ENCODE measurements at regions of chr1 and their contacts with region 1.

Region 1: DNA sequence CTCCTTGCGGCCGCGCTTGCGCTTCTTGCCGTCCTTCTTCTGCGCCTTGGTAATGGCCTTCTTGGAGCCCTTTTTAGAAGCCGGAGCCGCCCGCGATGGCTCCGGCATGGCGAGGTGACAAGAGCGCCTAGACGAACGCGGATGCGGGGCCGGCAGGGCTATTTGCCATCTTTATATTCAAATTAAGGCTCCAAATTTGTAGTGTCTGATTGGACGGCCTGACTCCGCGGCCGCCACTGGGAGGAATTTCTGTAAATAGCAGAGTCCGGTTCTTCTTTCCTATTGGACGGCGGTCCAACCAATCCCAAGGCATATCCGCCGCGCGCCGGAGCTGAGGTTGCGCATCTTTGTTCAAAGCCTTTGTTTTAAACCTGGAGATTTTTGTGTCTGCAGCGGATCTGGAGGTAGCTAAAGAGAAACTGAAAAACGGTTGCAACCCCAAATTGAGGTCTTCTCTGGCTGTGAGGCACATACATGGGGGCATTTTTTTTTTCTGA is 22.6 kb upstream of the RNF187 start:
- DNase-seq: peak; percentile 75 to 95 (median 86)
- ATAC-seq: peak; percentile 96
- H3K4me3 ChIP-seq: peak overlapping the region; percentile 45 to 51
- H3K4me3 Mint-ChIP-seq: peak overlapping the region; percentile 85
- H3K27ac ChIP-seq: peak overlapping the region; percentile 18 to 41
- H3K27ac Mint-ChIP-seq: peak overlapping the region; percentile 69
- H3K4me1 ChIP-seq: peaks cover 28% of the 10 kb centered on the region
- H3K4me1 Mint-ChIP-seq: peaks cover 40% of the 10 kb centered on the region
- H3K27me3 ChIP-seq: no peaks in the 10 kb centered on the region
- H3K27me3 Mint-ChIP-seq: peaks cover 14% of the 10 kb centered on the region
- CTCF ChIP-seq: no peak

Region 2: GRCh38 chr1:228275739-228276421 is 188.7 kb before region 1 on chr1:
- CTCF ChIA-PET with region 1: no interaction called
- POLR2A ChIA-PET with region 1: no interaction called
- intact Hi-C with region 1: loop called in 1 of 2 experiments (anchors 1 kb)
- DNase-seq: peak; percentile 74 to 95 (median 92)
- ATAC-seq: peak; percentile 96
- H3K4me3 ChIP-seq: peak overlapping the region; percentile 75 to 81
- H3K4me3 Mint-ChIP-seq: peak overlapping the region; percentile 80
- H3K27ac ChIP-seq: peak overlapping the region; percentile 31 to 39
- H3K27ac Mint-ChIP-seq: peak overlapping the region; percentile 18
- H3K4me1 ChIP-seq: peaks cover 6% of the 10 kb centered on the region
- H3K4me1 Mint-ChIP-seq: peaks cover 12% of the 10 kb centered on the region
- H3K27me3 ChIP-seq: no peaks in the 10 kb centered on the region
- H3K27me3 Mint-ChIP-seq: no peaks in the 10 kb centered on the region
- CTCF ChIP-seq: no peak

Region 3: DNA sequence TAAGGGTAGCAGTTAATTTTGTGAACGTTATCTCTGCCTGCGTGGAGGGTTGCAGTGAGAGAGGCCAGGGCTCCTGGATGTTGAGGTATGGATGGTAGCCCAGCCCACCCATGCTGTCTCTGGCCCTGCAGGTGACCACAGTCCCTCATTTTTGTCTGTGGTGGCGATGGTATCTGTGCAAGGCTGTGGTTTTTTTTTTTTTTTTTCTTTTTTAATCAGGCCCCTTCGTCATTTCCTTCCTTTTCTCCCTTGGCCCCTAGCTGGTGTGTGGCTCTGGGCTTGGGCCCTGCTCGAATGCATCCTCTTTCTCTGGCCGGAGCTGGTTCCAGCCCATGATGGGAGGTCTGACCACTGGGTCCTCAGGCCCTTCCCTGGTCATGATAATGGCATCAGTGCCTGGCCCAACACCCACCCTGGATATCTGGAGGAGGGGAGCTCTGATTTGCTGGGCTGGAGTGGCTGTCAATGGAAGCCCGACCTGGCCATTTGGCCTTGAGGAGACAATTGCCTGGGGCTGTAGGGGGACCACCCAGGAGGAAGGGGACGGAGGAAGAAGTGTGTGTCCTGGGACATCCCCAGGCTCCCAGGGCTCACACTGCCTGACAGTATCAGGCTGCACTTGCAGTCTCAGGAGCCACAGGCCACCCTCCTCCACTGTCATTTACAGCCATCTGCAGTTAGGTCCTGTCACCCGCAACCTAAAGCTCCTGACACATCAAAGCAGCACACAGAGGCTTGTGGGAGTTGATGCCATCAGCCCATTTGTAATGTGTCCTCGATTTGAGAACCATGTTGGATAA is 14.6 kb after region 1 on chr1:
- CTCF ChIA-PET with region 1: interaction called, 9 read pairs
- POLR2A ChIA-PET with region 1: interaction called, 4 read pairs
- intact Hi-C with region 1: loop called in 1 of 2 experiments (anchors 1 kb)
- DNase-seq: peak in 2 of 9 experiments; percentile 52 to 61
- ATAC-seq: peak; percentile 52
- H3K4me3 ChIP-seq: no peak overlapping the region
- H3K4me3 Mint-ChIP-seq: no peak overlapping the region
- H3K27ac ChIP-seq: peak overlapping the region in 1 of 2 experiments; percentile 63
- H3K27ac Mint-ChIP-seq: peak overlapping the region; percentile 77
- H3K4me1 ChIP-seq: peaks cover 8% of the 10 kb centered on the region
- H3K4me1 Mint-ChIP-seq: peaks cover 17% of the 10 kb centered on the region
- H3K27me3 ChIP-seq: no peaks in the 10 kb centered on the region
- H3K27me3 Mint-ChIP-seq: no peaks in the 10 kb centered on the region
- CTCF ChIP-seq: no peak

Region 4: GRCh38 chr1:228486596-228487335 is 22.2 kb after region 1 on chr1:
- CTCF ChIA-PET with region 1: interaction called, 10 read pairs
- POLR2A ChIA-PET with region 1: interaction called, 38 read pairs
- intact Hi-C with region 1: loop called (anchors 1 to 2 kb)
- DNase-seq: peak; percentile 66 to 94 (median 77)
- ATAC-seq: peak; percentile 75
- H3K4me3 ChIP-seq: peak overlapping the region; percentile 88 to 90
- H3K4me3 Mint-ChIP-seq: peak overlapping the region; percentile 98
- H3K27ac ChIP-seq: peak overlapping the region; percentile 100
- H3K27ac Mint-ChIP-seq: peak overlapping the region; percentile 100
- H3K4me1 ChIP-seq: peaks cover 31% of the 10 kb centered on the region
- H3K4me1 Mint-ChIP-seq: peaks cover 37% of the 10 kb centered on the region
- H3K27me3 ChIP-seq: no peaks in the 10 kb centered on the region
- H3K27me3 Mint-ChIP-seq: no peaks in the 10 kb centered on the region
- CTCF ChIP-seq: no peak

Region 5: DNA sequence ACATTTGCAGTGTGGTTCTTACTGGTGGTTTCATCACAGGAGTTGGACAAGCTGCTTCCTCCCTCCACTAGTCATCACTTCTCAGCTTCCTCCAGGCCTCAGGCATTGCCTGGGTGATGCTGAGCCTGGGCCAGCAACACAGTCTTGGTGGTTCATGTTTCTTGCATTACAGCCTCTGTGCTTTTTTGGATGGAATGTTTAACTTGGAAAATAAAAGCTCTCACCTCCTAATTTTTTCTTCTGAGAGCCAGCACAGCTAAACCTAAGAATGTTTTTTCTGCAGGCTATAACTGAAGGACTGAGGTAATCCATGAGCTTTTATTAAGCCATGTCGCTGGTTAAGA is 204.7 kb after region 1 on chr1:
- CTCF ChIA-PET with region 1: no interaction called
- POLR2A ChIA-PET with region 1: no interaction called
- intact Hi-C with region 1: no loop called
- DNase-seq: no peak
- ATAC-seq: no peak
- H3K4me3 ChIP-seq: no peak overlapping the region
- H3K4me3 Mint-ChIP-seq: no peak overlapping the region
- H3K27ac ChIP-seq: no peak overlapping the region
- H3K27ac Mint-ChIP-seq: no peak overlapping the region
- H3K4me1 ChIP-seq: no peaks in the 10 kb centered on the region
- H3K4me1 Mint-ChIP-seq: peaks cover 3% of the 10 kb centered on the region
- H3K27me3 ChIP-seq: no peaks in the 10 kb centered on the region
- H3K27me3 Mint-ChIP-seq: no peaks in the 10 kb centered on the region
- CTCF ChIP-seq: no peak

Region 6: GRCh38 chr1:228860911-228861831 is 396.6 kb after region 1 on chr1:
- CTCF ChIA-PET with region 1: no interaction called
- POLR2A ChIA-PET with region 1: no interaction called
- intact Hi-C with region 1: no loop called
- DNase-seq: peak in 1 of 9 experiments; percentile 38
- ATAC-seq: no peak
- H3K4me3 ChIP-seq: no peak overlapping the region
- H3K4me3 Mint-ChIP-seq: no peak overlapping the region
- H3K27ac ChIP-seq: no peak overlapping the region
- H3K27ac Mint-ChIP-seq: no peak overlapping the region
- H3K4me1 ChIP-seq: peaks cover 17% of the 10 kb centered on the region
- H3K4me1 Mint-ChIP-seq: peaks cover 24% of the 10 kb centered on the region
- H3K27me3 ChIP-seq: no peaks in the 10 kb centered on the region
- H3K27me3 Mint-ChIP-seq: peaks cover 6% of the 10 kb centered on the region
- CTCF ChIP-seq: no peak

Region 7: DNA sequence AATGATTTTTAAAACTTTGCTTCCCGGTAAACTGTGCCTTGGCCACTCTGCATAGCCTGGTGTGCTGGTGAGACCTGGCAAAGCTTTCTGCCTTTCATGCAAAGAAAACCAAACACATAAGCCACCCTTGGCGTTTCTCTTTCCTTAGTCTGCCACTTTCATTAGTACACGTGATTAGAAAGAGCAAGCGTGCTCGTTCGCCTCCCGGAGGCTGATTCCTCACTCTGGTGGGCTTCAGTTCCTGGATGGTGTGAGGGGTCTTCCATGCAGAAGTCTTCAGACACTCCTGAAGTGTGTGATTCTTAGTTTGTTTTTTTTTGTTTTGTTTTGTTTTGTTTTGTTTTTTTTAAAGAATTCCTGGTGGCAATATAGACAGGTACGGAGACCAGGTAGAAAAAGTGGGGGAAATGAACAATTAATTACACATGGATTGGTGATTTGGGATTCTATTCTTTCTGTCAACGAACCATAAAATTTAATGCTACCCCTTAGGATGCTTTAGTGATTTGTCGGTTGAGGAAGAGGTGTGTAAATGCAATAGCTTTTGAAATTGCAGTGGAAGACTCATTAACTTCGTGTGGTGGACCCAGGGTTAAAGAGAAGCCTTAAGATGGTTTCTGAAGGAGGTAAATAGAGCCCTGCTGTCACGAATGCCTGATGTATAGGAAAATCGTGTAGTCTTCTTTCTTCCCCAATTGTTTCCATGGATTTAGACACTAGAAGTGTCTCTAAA is 1604.6 kb after region 1 on chr1:
- CTCF ChIA-PET with region 1: no interaction called
- POLR2A ChIA-PET with region 1: no interaction called
- intact Hi-C with region 1: no loop called
- DNase-seq: peak in 3 of 9 experiments; percentile 9 to 45 (median 37)
- ATAC-seq: no peak
- H3K4me3 ChIP-seq: peak overlapping the region; percentile 10 to 32
- H3K4me3 Mint-ChIP-seq: peak overlapping the region; percentile 85
- H3K27ac ChIP-seq: no peak overlapping the region
- H3K27ac Mint-ChIP-seq: peak overlapping the region; percentile 78
- H3K4me1 ChIP-seq: peaks cover 14% of the 10 kb centered on the region
- H3K4me1 Mint-ChIP-seq: peaks cover 57% of the 10 kb centered on the region
- H3K27me3 ChIP-seq: no peaks in the 10 kb centered on the region
- H3K27me3 Mint-ChIP-seq: no peaks in the 10 kb centered on the region
- CTCF ChIP-seq: no peak

Measured in CD8-positive, alpha-beta T cell (primary cell).